Stomach (tissue), 19 donors: ENCODE measurements at regions of chr11 and their contacts with region 1.

Region 1: GRCh38 chr11:117426269-117426685 is 98.6 kb downstream of the CEP164 start:
- DNase-seq: peak; percentile 60 to 85
- H3K4me3 ChIP-seq: peak overlapping the region in 1 of 4 donors; percentile 16
- H3K27ac ChIP-seq: no peak overlapping the region
- H3K4me1 ChIP-seq: peaks cover 0 to 9% (median 7%) of the 10 kb centered on the region in 4 donors
- H3K27me3 ChIP-seq: peaks cover 0 to 16% (median 0%) of the 10 kb centered on the region in 3 donors
- CTCF ChIP-seq: peak in 5 of 7 experiments; percentile 73 to 93 (median 86)
- EP300 ChIP-seq: no peak
- POLR2A ChIP-seq: no peak

Region 2: DNA sequence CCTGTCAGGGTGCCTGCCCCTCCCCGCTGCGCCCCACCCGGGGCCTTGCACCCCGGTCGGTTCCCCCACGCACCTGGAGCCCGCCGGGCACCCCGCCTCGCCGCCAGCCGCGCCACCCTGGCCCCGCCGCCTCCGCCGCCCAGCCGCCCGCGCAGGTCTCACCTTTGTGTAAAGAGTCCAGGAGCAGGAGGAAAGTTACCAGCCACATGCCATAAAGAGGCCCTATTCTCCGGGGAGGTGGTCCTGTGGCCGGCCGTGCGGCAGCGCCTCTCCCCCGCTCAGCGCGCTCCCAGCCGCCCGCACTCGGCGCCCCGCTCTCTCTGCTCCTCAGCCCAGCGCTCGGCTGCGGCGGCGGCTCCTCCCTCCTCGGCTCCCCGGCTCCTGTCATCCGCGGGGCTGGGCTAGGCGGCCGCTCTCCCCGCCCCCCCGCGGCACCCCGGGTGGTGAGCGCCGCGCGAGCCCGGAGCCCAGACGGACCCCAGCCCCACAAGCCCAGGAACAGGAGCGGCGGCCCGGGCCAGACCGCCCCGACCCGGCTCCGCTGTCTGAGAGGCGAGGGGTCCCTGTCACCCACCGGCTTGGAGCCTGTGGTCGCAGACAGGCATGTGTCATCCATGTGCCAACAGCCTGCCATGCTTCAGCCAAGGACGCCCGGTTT is 370.7 kb after region 1 on chr11 and contains the start of gene DSCAML1:
- intact Hi-C with region 1: loop called (anchors 10 kb)
- DNase-seq: peak in 1 of 2 donors; percentile 75
- H3K4me3 ChIP-seq: peak within 1 kb of the TSS; percentile 30 to 45 (median 40)
- H3K27ac ChIP-seq: no peak within 1 kb of the TSS
- H3K4me1 ChIP-seq: peaks cover 20 to 26% (median 23%) of the 10 kb centered on the region in 4 donors
- H3K27me3 ChIP-seq: peaks cover 14 to 80% (median 60%) of the 10 kb centered on the region in 3 donors
- CTCF ChIP-seq: no peak
- EP300 ChIP-seq: no peak
- POLR2A ChIP-seq: no peak
- total RNA-seq, gene DSCAML1: 0.14 to 2.9 (median 0.45) TPM

Region 3: GRCh38 chr11:117817368-117818040 is 391.2 kb after region 1 on chr11:
- intact Hi-C with region 1: loop called (anchors 5 kb)
- DNase-seq: peak; percentile 79 to 94
- H3K4me3 ChIP-seq: peak overlapping the region in 1 of 4 donors; percentile 13
- H3K27ac ChIP-seq: peak overlapping the region in 4 of 5 donors; percentile 46 to 80 (median 74)
- H3K4me1 ChIP-seq: peaks cover 26 to 51% (median 39%) of the 10 kb centered on the region in 4 donors
- H3K27me3 ChIP-seq: peaks cover 0 to 13% (median 0%) of the 10 kb centered on the region in 3 donors
- CTCF ChIP-seq: peak in 6 of 7 experiments; percentile 93 to 100 (median 100)
- EP300 ChIP-seq: no peak
- POLR2A ChIP-seq: no peak